Naive thymus-derived CD4-positive, alpha-beta T cell (primary cell): ENCODE measurements at regions of chr9 and their contacts with region 1.

Region 1: GRCh38 chr9:70602321-70603019 is 188.0 kb upstream of the KLF9 start:
- DNase-seq: peak in 7 of 9 donors; percentile 27 to 68 (median 52)
- ATAC-seq: peak; percentile 84
- H3K4me3 ChIP-seq: no peak overlapping the region
- H3K4me3 Mint-ChIP-seq: no peak overlapping the region
- H3K27ac ChIP-seq: no peak overlapping the region
- H3K27ac Mint-ChIP-seq: peak overlapping the region in 3 of 9 donors; percentile 32 to 79 (median 55)
- H3K4me1 ChIP-seq: no peaks in the 10 kb centered on the region
- H3K4me1 Mint-ChIP-seq: peaks cover 0 to 19% (median 5%) of the 10 kb centered on the region in 7 donors
- H3K27me3 ChIP-seq: no peaks in the 10 kb centered on the region
- H3K27me3 Mint-ChIP-seq: no peaks in the 10 kb centered on the region

Region 2: GRCh38 chr9:70111042-70111602 is 491.3 kb before region 1 on chr9:
- CTCF ChIA-PET with region 1: no interaction called
- POLR2A ChIA-PET with region 1: no interaction called
- intact Hi-C with region 1: loop called in 1 of 2 experiments (anchors 5 kb)
- DNase-seq: peak in 7 of 9 donors; percentile 11 to 46 (median 22)
- ATAC-seq: peak; percentile 70
- H3K4me3 ChIP-seq: no peak overlapping the region
- H3K4me3 Mint-ChIP-seq: peak overlapping the region in 1 of 10 donors; percentile 32
- H3K27ac ChIP-seq: no peak overlapping the region
- H3K27ac Mint-ChIP-seq: no peak overlapping the region
- H3K4me1 ChIP-seq: no peaks in the 10 kb centered on the region
- H3K4me1 Mint-ChIP-seq: peaks cover 4 to 10% (median 7%) of the 10 kb centered on the region in 7 donors
- H3K27me3 ChIP-seq: peaks cover 0 to 4% of the 10 kb centered on the region in 2 donors
- H3K27me3 Mint-ChIP-seq: peaks cover 13 to 32% (median 20%) of the 10 kb centered on the region in 5 donors

Region 3: DNA sequence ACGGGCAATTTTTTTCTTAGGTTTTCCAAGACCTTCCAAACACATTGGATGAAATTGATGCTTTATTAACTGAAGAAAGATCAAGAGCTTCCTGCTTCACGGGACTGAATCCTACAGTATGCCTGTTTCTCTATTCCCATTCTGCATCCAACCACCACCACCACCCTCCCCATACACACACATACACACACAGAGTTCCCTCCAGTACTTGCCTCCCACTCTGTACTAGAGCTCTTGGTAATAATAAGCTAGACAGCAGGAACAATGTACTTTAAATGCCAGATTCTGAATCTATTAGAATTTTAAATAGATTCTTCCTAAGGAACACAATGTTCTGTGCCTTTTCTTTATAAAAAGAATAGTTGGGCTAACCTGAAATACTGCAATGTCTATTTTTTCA is 255.4 kb before region 1 on chr9:
- CTCF ChIA-PET with region 1: interaction called, 20 read pairs
- POLR2A ChIA-PET with region 1: no interaction called
- intact Hi-C with region 1: loop called (anchors 1 kb)
- DNase-seq: no peak
- ATAC-seq: no peak
- H3K4me3 ChIP-seq: no peak overlapping the region
- H3K4me3 Mint-ChIP-seq: no peak overlapping the region
- H3K27ac ChIP-seq: no peak overlapping the region
- H3K27ac Mint-ChIP-seq: peak overlapping the region in 2 of 9 donors; percentile 4 to 22
- H3K4me1 ChIP-seq: no peaks in the 10 kb centered on the region
- H3K4me1 Mint-ChIP-seq: no peaks in the 10 kb centered on the region
- H3K27me3 ChIP-seq: no peaks in the 10 kb centered on the region
- H3K27me3 Mint-ChIP-seq: no peaks in the 10 kb centered on the region

Region 4: DNA sequence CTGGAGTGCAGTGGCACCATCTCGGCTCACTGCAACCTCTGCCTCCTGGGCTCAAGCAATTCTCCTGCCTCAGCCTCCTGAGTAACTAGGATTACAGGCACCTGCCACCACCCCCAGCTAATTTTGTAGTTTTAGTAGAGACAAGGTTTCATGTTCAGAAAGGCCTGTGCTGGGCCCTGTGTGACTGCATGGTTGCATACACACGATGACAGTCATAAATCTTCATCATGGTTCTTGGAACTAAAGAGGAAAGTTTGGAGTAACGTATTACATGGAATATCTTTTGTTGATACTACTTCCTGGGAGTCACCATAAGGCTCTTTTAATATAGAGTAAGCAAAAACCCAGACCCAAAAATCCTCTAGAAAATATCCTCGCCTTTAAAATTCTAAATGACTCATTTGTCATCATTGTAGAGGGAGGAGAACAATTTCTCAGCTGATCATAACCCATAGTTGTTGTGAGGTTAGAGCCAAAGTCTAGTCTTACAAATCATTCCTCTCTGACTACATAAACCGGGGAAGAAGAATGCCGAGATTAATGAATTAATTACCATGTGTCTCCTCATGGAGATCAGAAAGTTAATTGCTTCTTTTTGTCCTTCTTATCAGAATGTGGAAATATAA is 235.1 kb before region 1 on chr9:
- CTCF ChIA-PET with region 1: no interaction called
- POLR2A ChIA-PET with region 1: no interaction called
- intact Hi-C with region 1: no loop called
- DNase-seq: no peak
- ATAC-seq: no peak
- H3K4me3 ChIP-seq: no peak overlapping the region
- H3K4me3 Mint-ChIP-seq: no peak overlapping the region
- H3K27ac ChIP-seq: no peak overlapping the region
- H3K27ac Mint-ChIP-seq: peak overlapping the region in 1 of 9 donors; percentile 42
- H3K4me1 ChIP-seq: no peaks in the 10 kb centered on the region
- H3K4me1 Mint-ChIP-seq: no peaks in the 10 kb centered on the region
- H3K27me3 ChIP-seq: no peaks in the 10 kb centered on the region
- H3K27me3 Mint-ChIP-seq: no peaks in the 10 kb centered on the region

Region 5: DNA sequence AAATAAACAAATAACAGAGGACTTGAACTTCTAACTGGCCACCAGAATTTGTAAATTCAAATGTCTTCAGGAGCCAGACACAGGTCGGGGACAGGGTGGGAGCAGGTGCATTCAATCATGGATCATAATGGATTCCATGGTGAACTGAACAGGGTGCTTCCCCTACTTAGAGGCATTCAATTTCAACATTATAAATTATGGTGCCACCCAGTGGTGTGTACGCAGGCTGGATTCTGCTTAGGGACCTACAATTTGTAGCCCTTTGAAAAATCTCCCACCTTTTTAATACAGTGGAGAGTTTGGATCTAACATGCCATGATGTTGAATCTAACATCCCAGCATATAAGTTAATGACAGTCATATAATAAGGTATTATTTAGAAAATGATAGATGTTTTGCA is 210.3 kb before region 1 on chr9:
- CTCF ChIA-PET with region 1: interaction called, 4 read pairs
- POLR2A ChIA-PET with region 1: interaction called, 3 read pairs
- intact Hi-C with region 1: loop called in 1 of 2 experiments (anchors 1 kb)
- DNase-seq: no peak
- ATAC-seq: peak; percentile 64
- H3K4me3 ChIP-seq: no peak overlapping the region
- H3K4me3 Mint-ChIP-seq: peak overlapping the region in 8 of 10 donors; percentile 20 to 72 (median 46)
- H3K27ac ChIP-seq: no peak overlapping the region
- H3K27ac Mint-ChIP-seq: peak overlapping the region in 5 of 9 donors; percentile 4 to 76 (median 41)
- H3K4me1 ChIP-seq: peaks cover 13 to 64% of the 10 kb centered on the region in 2 donors
- H3K4me1 Mint-ChIP-seq: peaks cover 48 to 98% (median 88%) of the 10 kb centered on the region in 7 donors
- H3K27me3 ChIP-seq: no peaks in the 10 kb centered on the region
- H3K27me3 Mint-ChIP-seq: no peaks in the 10 kb centered on the region

Region 6: GRCh38 chr9:70484210-70485130 is 118.0 kb before region 1 on chr9:
- CTCF ChIA-PET with region 1: interaction called, 11 read pairs
- POLR2A ChIA-PET with region 1: no interaction called
- intact Hi-C with region 1: loop called in 1 of 2 experiments (anchors 1 kb)
- DNase-seq: peak in 6 of 9 donors; percentile 13 to 38 (median 32)
- ATAC-seq: peak; percentile 85
- H3K4me3 ChIP-seq: no peak overlapping the region
- H3K4me3 Mint-ChIP-seq: no peak overlapping the region
- H3K27ac ChIP-seq: no peak overlapping the region
- H3K27ac Mint-ChIP-seq: peak overlapping the region in 1 of 9 donors; percentile 36
- H3K4me1 ChIP-seq: no peaks in the 10 kb centered on the region
- H3K4me1 Mint-ChIP-seq: peaks cover 4 to 26% (median 13%) of the 10 kb centered on the region in 7 donors
- H3K27me3 ChIP-seq: no peaks in the 10 kb centered on the region
- H3K27me3 Mint-ChIP-seq: peaks cover 0 to 10% (median 0%) of the 10 kb centered on the region in 5 donors

Region 7: GRCh38 chr9:70563431-70564204 is 38.9 kb before region 1 on chr9:
- CTCF ChIA-PET with region 1: interaction called, 23 read pairs
- POLR2A ChIA-PET with region 1: interaction called, 4 read pairs
- intact Hi-C with region 1: loop called (anchors 1 kb)
- DNase-seq: peak in 8 of 9 donors; percentile 45 to 86 (median 78)
- ATAC-seq: peak; percentile 93
- H3K4me3 ChIP-seq: peak overlapping the region; percentile 15
- H3K4me3 Mint-ChIP-seq: peak overlapping the region; percentile 45 to 85 (median 68)
- H3K27ac ChIP-seq: peak overlapping the region; percentile 67
- H3K27ac Mint-ChIP-seq: peak overlapping the region; percentile 85 to 98 (median 95)
- H3K4me1 ChIP-seq: peaks cover 17 to 34% of the 10 kb centered on the region in 2 donors
- H3K4me1 Mint-ChIP-seq: peaks cover 33 to 66% (median 53%) of the 10 kb centered on the region in 7 donors
- H3K27me3 ChIP-seq: no peaks in the 10 kb centered on the region
- H3K27me3 Mint-ChIP-seq: no peaks in the 10 kb centered on the region

Region 8: DNA sequence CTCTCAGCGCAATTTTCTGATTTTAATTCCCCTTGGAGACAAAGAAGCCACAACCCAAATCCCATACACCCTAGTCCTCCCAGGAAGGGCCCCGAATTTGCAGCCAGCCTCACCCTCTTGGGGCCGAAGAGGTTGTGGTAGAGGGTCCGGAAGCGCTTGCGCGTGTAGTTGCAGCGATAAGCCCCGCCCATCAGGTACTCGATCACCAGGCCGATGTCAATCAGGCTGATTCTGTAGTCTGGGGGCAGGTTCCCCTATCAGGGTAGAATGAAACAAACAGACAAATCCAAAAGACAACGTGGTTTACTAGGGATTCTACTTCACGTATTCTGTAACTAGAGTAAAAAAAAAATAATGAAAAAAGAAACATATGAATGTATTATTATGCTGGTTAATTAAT is 22.6 kb after region 1 on chr9:
- CTCF ChIA-PET with region 1: no interaction called
- POLR2A ChIA-PET with region 1: no interaction called
- intact Hi-C with region 1: no loop called
- DNase-seq: no peak
- ATAC-seq: no peak
- H3K4me3 ChIP-seq: no peak overlapping the region
- H3K4me3 Mint-ChIP-seq: peak overlapping the region in 4 of 10 donors; percentile 9 to 38 (median 36)
- H3K27ac ChIP-seq: no peak overlapping the region
- H3K27ac Mint-ChIP-seq: no peak overlapping the region
- H3K4me1 ChIP-seq: no peaks in the 10 kb centered on the region
- H3K4me1 Mint-ChIP-seq: peaks cover 0 to 2% (median 0%) of the 10 kb centered on the region in 7 donors
- H3K27me3 ChIP-seq: no peaks in the 10 kb centered on the region
- H3K27me3 Mint-ChIP-seq: peaks cover 0 to 16% (median 0%) of the 10 kb centered on the region in 5 donors